CD4-positive, alpha-beta memory T cell (primary cell): ENCODE measurements at regions of chr12 and their contacts with region 1.

Region 1: DNA sequence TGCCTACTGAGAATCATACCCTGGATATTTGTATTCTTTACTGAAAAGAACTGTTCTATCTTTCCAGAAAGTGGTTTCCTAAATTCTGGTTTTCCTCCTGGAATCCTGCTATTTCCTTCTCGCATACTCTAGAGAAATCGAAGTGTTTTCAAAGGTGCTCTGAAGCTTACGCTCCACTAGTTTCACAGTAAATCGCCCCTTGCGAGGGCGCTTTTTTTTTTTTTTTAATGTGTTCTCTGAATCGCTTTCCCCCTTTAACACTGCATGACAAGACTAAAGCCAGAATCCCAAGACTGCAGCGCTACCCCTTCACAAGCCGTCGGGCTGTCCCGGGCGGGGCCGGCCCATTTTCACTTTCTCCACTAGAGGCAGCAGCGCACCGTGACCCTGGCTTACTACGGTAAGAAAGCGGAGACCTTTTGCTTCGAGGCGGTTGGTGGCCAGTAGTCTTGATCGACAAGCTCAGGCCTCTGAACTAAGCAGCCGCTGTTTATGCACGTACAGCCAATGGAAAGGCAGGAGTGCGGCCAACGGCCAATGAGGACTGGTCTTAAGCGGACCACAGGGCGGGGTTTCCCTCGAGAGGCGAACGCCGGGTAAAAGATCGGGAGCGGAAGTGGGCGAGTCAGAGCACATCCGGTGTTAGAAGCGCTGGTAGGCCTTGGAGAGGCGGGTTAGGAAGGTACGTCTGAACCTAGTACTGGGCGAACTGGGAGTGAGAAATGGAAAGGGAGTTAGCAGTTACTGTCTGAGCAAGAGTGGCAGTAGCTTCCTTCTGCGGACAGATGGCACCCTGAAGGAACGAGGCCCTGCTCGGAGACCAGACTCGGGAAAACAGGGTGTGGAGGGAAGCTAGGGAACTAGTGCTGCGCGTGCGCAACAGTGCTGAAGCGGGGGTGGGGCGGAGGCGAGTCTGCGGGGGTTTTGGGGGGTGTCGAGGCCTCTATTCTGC is at the start of gene TMBIM6:
- DNase-seq: peak; percentile 98 to 100 (median 99)
- H3K4me3 ChIP-seq: peak within 1 kb of the TSS; percentile 27 to 86
- H3K4me3 Mint-ChIP-seq: peak within 1 kb of the TSS; percentile 92 to 97 (median 93)
- H3K27ac ChIP-seq: peak within 1 kb of the TSS; percentile 99
- H3K27ac Mint-ChIP-seq: peak within 1 kb of the TSS; percentile 95 to 100 (median 98)
- H3K4me1 ChIP-seq: peaks cover 45% of the 10 kb centered on the region
- H3K4me1 Mint-ChIP-seq: peaks cover 27 to 52% (median 38%) of the 10 kb centered on the region in 4 donors
- H3K27me3 ChIP-seq: no peaks in the 10 kb centered on the region
- H3K27me3 Mint-ChIP-seq: no peaks in the 10 kb centered on the region
- total RNA-seq, gene TMBIM6: 421 to 431 TPM

Region 2: GRCh38 chr12:49567611-49568441 is 173.4 kb before region 1 on chr12 and contains the start of gene MCRS1:
- CTCF ChIA-PET with region 1: interaction called, 3 read pairs
- POLR2A ChIA-PET with region 1: interaction called, 5 read pairs
- intact Hi-C with region 1: loop called (anchors 1 kb)
- DNase-seq: peak; percentile 92 to 94 (median 93)
- H3K4me3 ChIP-seq: peak within 1 kb of the TSS; percentile 88 to 100
- H3K4me3 Mint-ChIP-seq: peak within 1 kb of the TSS; percentile 92 to 100 (median 99)
- H3K27ac ChIP-seq: peak within 1 kb of the TSS; percentile 89
- H3K27ac Mint-ChIP-seq: peak within 1 kb of the TSS; percentile 93 to 100 (median 99)
- H3K4me1 ChIP-seq: peaks cover 49% of the 10 kb centered on the region
- H3K4me1 Mint-ChIP-seq: peaks cover 32 to 71% (median 54%) of the 10 kb centered on the region in 4 donors
- H3K27me3 ChIP-seq: no peaks in the 10 kb centered on the region
- H3K27me3 Mint-ChIP-seq: no peaks in the 10 kb centered on the region
- total RNA-seq, gene MCRS1: 77.0 to 78.4 TPM

Region 3: GRCh38 chr12:49662998-49663843 is 78.0 kb before region 1 on chr12:
- CTCF ChIA-PET with region 1: interaction called, 4 read pairs
- POLR2A ChIA-PET with region 1: interaction called, 13 read pairs
- intact Hi-C with region 1: no loop called
- DNase-seq: peak; percentile 71 to 93 (median 75)
- H3K4me3 ChIP-seq: peak overlapping the region; percentile 48 to 50
- H3K4me3 Mint-ChIP-seq: peak overlapping the region; percentile 61 to 91 (median 84)
- H3K27ac ChIP-seq: peak overlapping the region; percentile 57
- H3K27ac Mint-ChIP-seq: peak overlapping the region; percentile 92 to 99 (median 97)
- H3K4me1 ChIP-seq: peaks cover 52% of the 10 kb centered on the region
- H3K4me1 Mint-ChIP-seq: peaks cover 56 to 84% (median 67%) of the 10 kb centered on the region in 4 donors
- H3K27me3 ChIP-seq: no peaks in the 10 kb centered on the region
- H3K27me3 Mint-ChIP-seq: no peaks in the 10 kb centered on the region

Region 4: GRCh38 chr12:49763006-49763591 is 21.9 kb after region 1 on chr12:
- CTCF ChIA-PET with region 1: interaction called, 85 read pairs
- POLR2A ChIA-PET with region 1: interaction called, 107 read pairs
- intact Hi-C with region 1: loop called (anchors 1 kb)
- DNase-seq: peak; percentile 74 to 86 (median 76)
- H3K4me3 ChIP-seq: no peak overlapping the region
- H3K4me3 Mint-ChIP-seq: peak overlapping the region in 7 of 8 donors; percentile 7 to 74 (median 49)
- H3K27ac ChIP-seq: peak overlapping the region; percentile 56
- H3K27ac Mint-ChIP-seq: peak overlapping the region; percentile 69 to 95 (median 86)
- H3K4me1 ChIP-seq: peaks cover 61% of the 10 kb centered on the region
- H3K4me1 Mint-ChIP-seq: peaks cover 50 to 64% (median 57%) of the 10 kb centered on the region in 4 donors
- H3K27me3 ChIP-seq: no peaks in the 10 kb centered on the region
- H3K27me3 Mint-ChIP-seq: no peaks in the 10 kb centered on the region

Region 5: GRCh38 chr12:49842519-49843352 is 101.5 kb after region 1 on chr12 and contains the start of gene BCDIN3D:
- CTCF ChIA-PET with region 1: interaction called, 34 read pairs
- POLR2A ChIA-PET with region 1: interaction called, 49 read pairs
- intact Hi-C with region 1: loop called (anchors 1 kb)
- DNase-seq: peak; percentile 90 to 93 (median 91)
- H3K4me3 ChIP-seq: peak within 1 kb of the TSS; percentile 84 to 90
- H3K4me3 Mint-ChIP-seq: peak within 1 kb of the TSS; percentile 91 to 97 (median 94)
- H3K27ac ChIP-seq: peak within 1 kb of the TSS; percentile 76
- H3K27ac Mint-ChIP-seq: peak within 1 kb of the TSS; percentile 86 to 97 (median 95)
- H3K4me1 ChIP-seq: peaks cover 31% of the 10 kb centered on the region
- H3K4me1 Mint-ChIP-seq: peaks cover 23 to 48% (median 39%) of the 10 kb centered on the region in 4 donors
- H3K27me3 ChIP-seq: no peaks in the 10 kb centered on the region
- H3K27me3 Mint-ChIP-seq: no peaks in the 10 kb centered on the region
- total RNA-seq, gene BCDIN3D: 16.0 to 17.5 TPM

Region 6: GRCh38 chr12:51238510-51239334 is 1497.5 kb after region 1 on chr12 and contains the start of gene DAZAP2:
- CTCF ChIA-PET with region 1: no interaction called
- POLR2A ChIA-PET with region 1: no interaction called
- intact Hi-C with region 1: loop called (anchors 5 kb)
- DNase-seq: peak; percentile 91 to 95 (median 94)
- H3K4me3 ChIP-seq: peak within 1 kb of the TSS; percentile 98 to 100
- H3K4me3 Mint-ChIP-seq: peak within 1 kb of the TSS; percentile 93 to 99 (median 98)
- H3K27ac ChIP-seq: peak within 1 kb of the TSS; percentile 100
- H3K27ac Mint-ChIP-seq: peak within 1 kb of the TSS; percentile 99 to 100 (median 100)
- H3K4me1 ChIP-seq: peaks cover 40% of the 10 kb centered on the region
- H3K4me1 Mint-ChIP-seq: peaks cover 27 to 57% (median 40%) of the 10 kb centered on the region in 4 donors
- H3K27me3 ChIP-seq: no peaks in the 10 kb centered on the region
- H3K27me3 Mint-ChIP-seq: peaks cover 0 to 1% of the 10 kb centered on the region in 2 donors
- total RNA-seq, gene DAZAP2: 275 to 286 TPM